Right ventricle myocardium superior (tissue), 1 donor: ENCODE measurements at regions of chr11 and their contacts with region 1.

Region 1: DNA sequence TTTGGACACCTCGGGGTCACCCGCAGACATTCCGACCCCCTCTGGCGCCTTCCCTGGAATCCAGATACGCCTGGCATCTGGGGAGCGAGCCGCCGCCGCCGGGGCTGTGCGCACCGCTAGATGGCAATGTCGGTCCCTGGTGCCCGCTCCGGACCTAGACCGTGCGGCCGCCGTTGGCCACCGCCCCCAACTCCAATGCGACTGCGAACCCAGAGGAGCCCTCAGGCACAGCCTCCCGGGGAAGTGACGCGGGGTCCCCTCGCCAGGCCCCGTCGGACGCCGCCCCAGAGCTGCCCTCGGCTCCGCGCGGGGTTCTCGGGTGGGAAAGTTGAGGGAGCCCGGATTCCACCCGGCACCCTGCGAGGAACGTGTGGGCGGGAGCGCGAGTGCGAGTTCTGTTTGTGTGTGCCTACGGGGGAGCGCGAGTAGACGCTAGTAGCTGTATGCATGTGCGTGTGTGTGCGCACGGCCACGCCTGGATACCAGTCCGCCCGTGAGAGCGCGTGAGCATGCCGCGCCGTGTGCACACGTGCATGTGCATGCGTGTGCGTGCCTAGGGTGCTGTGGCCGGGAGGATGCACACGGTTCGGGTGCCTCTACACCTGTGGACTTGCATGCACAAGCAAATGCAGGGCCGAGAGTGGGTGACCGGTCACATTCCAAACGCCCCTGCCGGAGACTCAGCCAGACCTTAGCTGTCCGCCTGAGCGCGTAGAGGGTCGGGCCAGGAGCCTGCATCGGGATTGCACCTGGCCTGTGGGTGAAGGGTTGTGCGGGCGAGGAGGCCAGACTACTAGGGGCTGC is 1.9 kb downstream of the CHRM4 start:
- DNase-seq: peak; percentile 83
- ATAC-seq: peak; percentile 79

Region 2: DNA sequence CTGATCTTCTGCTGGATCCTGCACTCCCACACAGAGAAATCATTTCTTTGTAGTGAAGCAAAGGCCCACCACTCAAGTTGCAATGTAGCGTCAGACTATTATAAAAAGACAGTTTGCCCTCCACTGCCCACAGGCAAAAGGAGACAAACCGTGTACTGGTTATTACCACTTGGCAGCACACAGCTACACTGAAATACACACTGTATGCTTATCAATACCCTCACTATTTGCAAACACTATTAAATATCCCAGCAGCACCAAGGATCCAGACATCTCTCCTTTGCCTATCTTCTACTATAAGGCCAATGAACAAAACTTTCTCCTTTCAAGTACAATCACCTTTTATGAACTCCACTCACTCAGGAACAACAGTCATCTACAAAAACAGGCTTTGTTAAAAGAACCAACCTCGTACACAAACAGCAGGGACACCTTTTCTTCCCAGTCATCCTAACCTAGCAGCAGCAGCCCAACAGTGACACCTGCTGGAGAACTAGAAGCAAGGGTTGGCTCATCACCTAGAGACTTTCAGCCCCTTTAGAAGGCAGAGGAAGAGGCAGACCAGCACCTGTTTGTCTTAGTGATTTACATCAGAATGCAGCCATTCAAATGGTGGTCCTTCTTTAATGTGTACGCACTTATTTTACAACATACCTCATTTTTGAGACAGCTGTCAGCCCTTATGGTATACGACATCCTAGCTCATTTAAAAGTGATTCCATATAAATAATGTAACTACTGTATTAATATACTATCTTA is 148.1 kb after region 1 on chr11:
- intact Hi-C with region 1: loop called (anchors 2 kb)
- DNase-seq: peak; percentile 54
- ATAC-seq: peak; percentile 84